ENCODE measurements at regions of chr4 and their contacts with region 1.

Region 1: GRCh38 chr4:98745366-98745765 is 87.0 kb upstream of the TSPAN5 start:
- DNase-seq: peak; percentile 46
- H3K4me3 ChIP-seq: no peak overlapping the region
- H3K27ac ChIP-seq: no peak overlapping the region
- H3K4me1 ChIP-seq: peaks cover 46% of the 10 kb centered on the region
- H3K27me3 ChIP-seq: no peaks in the 10 kb centered on the region
- CTCF ChIP-seq: peak; percentile 67

Region 2: GRCh38 chr4:98828801-98829200 is 83.4 kb after region 1 on chr4:
- CTCF ChIA-PET with region 1: no interaction called
- POLR2A ChIA-PET with region 1: no interaction called
- intact Hi-C with region 1: loop called (anchors 5 kb)
- DNase-seq: peak; percentile 66
- H3K4me3 ChIP-seq: no peak overlapping the region
- H3K27ac ChIP-seq: no peak overlapping the region
- H3K4me1 ChIP-seq: peaks cover 23% of the 10 kb centered on the region
- H3K27me3 ChIP-seq: no peaks in the 10 kb centered on the region
- CTCF ChIP-seq: peak; percentile 62

Region 3: DNA sequence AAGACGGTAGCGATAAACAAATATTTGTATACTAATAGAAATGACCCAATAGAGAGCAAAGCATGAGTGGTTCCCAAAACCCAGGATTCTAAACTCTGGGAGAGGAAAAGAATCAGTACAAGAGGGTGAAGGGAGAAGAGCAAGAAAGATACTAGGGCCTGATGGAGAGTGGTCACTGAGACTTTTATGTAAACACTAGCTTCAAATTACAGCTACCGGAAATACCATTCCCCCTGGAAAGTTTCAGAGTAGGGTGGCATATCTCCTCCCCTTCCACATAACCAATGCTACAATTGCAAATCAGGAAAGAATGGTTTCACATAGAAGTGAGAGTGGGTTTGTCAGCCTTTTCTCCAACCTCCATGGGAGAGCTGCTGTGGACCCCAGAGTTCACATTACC is 106.4 kb after region 1 on chr4:
- CTCF ChIA-PET with region 1: no interaction called
- POLR2A ChIA-PET with region 1: interaction called, 4 read pairs
- intact Hi-C with region 1: loop called (anchors 5 kb)
- DNase-seq: peak; percentile 90
- H3K4me3 ChIP-seq: no peak overlapping the region
- H3K27ac ChIP-seq: peak overlapping the region; percentile 78
- H3K4me1 ChIP-seq: peaks cover 26% of the 10 kb centered on the region
- H3K27me3 ChIP-seq: no peaks in the 10 kb centered on the region
- CTCF ChIP-seq: no peak

Region 4: GRCh38 chr4:98939892-98940298 is 194.5 kb after region 1 on chr4:
- CTCF ChIA-PET with region 1: no interaction called
- POLR2A ChIA-PET with region 1: no interaction called
- intact Hi-C with region 1: no loop called
- DNase-seq: peak; percentile 81
- H3K4me3 ChIP-seq: no peak overlapping the region
- H3K27ac ChIP-seq: no peak overlapping the region
- H3K4me1 ChIP-seq: peaks cover 4% of the 10 kb centered on the region
- H3K27me3 ChIP-seq: no peaks in the 10 kb centered on the region
- CTCF ChIP-seq: peak; percentile 81

Region 5: DNA sequence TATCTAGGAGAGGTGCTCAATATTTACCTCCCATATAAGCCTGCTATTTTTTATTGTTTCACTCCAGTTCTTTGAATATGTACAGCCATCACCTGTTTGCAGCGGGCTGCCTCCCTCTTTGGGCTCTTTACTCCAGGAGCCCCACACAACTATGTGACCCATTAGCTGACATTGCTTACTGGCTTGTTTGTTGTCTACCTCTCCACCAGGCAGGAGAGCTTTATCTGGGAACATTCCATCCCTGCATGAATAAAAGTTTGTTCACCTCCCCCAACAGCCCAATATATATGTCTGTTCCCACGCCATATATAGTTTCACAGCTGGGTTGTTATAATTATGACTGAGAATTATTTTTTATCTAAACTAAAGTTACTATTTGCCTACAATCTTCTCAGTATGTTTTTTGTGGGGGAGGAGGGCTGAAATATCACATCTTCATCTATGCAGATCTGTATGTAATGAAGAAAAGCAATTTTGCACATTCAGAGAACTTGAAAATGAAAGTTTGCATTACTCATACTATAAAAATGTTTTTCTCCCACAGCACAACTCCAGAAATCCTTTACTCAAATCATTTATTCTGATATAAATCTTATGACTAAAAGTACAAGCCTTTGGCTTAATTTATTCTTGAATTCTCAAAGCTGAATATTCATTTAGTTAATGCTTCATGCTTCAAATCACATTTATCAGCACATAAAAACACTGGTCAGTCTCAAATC is 1010.0 kb after region 1 on chr4:
- CTCF ChIA-PET with region 1: no interaction called
- POLR2A ChIA-PET with region 1: no interaction called
- intact Hi-C with region 1: no loop called
- DNase-seq: no peak
- H3K4me3 ChIP-seq: no peak overlapping the region
- H3K27ac ChIP-seq: no peak overlapping the region
- H3K4me1 ChIP-seq: no peaks in the 10 kb centered on the region
- H3K27me3 ChIP-seq: no peaks in the 10 kb centered on the region
- CTCF ChIP-seq: no peak